Cardiac septum (tissue), 1 donor: ENCODE measurements at regions of chr22 and their contacts with region 1.

Region 1: DNA sequence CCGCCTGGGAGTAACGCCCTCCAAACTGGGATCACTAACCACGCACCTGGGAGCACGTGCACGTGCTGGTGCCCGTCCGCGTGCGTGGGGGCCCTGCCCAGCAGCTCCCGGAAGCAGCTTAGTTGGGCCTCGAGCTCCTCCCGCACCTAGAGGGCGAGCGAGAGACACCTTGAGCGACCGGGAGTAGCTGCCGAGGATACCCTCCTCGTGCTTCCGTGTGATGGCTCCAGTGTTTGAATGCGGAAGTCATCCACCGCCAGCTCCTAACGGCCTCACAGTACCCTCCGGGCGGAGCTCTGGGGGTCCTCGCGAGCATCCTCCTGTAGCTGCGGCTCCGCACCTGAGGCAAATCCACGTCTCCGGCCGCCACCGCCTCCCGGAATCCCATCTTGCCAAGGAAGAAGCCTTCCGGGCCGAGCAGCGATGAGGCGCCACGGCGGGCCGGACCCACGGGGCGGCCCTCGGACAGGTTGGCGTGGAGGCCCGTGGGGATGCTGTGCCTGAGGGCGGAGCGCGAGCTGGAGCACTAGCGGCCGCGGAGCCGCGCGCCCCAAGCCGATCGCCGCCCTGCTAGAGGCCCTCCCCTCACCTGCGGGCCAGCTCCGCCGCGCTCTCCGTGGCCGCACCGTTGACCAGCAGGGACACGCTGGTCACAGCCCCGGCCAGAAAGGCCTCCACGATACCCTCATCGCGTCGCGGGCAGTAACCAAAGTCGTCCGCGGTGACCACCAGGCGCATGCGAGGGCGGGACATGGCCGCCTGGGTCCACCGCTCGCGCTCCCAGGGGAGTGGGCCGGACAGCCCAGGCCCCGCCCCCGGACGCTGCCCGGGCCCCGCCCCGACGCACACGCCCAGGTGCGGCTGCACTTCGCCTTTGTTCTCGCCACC is at the start of gene YDJC:
- DNase-seq: peak; percentile 96
- total RNA-seq, gene YDJC: 5.9 TPM

Region 2: GRCh38 chr22:21593406-21594232 is 35.9 kb before region 1 on chr22:
- intact Hi-C with region 1: loop called (anchors 5 kb)
- DNase-seq: peak; percentile 79